ENCODE measurements at regions of chr3 and their contacts with region 1.

Region 1: DNA sequence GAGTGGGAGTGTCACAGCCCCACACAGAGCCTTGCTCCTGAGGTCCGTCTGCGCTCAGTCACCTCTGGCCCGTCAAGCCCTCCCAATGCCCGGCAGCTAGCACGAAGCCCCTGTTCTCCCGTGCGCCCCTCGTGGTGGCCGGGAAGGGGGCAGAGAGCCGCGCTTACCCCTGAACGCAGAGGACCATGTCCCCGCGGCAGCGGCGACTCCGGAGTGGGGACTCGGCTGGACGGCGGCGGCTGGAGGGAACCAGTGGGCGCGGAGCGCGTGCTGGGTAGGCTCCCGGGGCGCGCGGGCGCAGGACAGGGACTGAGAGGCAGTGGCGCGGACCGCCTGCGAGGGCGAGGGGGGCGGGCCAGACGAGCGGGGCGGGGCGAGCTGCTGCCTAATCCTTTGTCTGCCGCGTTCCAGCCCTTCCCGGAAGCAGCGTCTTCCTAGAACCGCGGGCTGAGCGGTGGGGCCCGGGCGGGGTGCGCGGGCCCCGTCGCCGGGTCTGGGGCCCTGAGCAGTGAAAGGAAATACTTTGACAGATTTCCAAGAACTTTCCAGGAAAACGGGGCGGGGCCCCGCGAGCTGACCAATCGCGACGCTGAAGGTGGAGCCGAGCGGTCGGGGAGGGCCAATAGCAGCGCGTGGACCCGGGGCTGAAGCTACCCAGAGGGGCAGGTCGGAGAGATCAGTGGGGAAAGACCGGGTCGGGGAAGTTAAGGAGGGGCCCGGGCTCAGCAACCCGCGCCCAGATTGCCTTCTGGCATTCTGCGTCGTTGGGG is at the start of gene CISH:
- DNase-seq: peak; percentile 67
- H3K4me3 ChIP-seq: peak within 1 kb of the TSS; percentile 68
- H3K27me3 ChIP-seq: no peaks in the 10 kb centered on the region
- CTCF ChIP-seq: peak; percentile 60
- polyA plus RNA-seq, gene CISH: 1.1 and 2.6 TPM in 2 replicates

Region 2: DNA sequence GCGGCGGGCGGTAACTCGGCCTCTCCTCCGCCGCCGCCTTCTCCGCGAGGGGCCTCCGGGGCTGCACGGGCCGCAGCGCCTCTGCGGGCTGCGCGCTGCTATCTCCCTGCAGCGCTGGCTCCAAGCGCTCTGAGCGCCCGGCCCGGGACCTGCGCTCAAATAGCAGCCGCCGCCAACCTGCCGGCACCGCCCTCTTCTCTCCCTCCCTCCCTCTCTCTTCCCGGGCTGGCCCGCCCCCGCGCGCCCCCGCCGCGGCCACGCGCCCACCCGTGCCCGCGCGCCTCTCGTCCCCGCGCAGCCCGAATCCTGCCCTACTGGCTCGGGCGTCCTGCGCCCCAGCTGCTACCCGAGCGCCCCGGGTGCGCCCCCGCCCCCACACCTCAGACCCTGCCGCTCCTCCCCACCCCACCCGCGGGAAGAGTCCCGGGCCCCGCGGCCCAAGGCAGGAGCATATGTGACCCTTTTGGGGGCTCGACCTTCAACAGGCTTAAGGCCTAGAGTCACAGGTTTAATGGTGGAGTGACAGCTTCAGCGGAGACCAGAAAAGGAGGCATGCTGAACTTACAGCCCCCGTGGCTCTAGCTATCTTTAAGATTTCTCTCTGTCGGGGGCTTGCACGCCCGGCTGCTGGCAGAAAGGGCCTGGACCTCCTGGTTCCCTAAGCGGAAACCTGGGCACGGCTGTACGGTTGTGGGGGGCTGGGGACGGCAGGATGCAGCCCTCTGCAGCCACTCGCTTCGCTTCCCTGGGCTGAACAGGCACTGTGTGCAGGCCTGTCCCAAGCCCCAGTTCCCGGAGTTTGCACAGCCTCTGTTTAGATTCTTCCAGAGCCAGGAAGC is 107.9 kb before region 1 on chr3 and contains the start of gene CACNA2D2:
- CTCF ChIA-PET with region 1: no interaction called
- POLR2A ChIA-PET with region 1: no interaction called
- DNase-seq: no peak
- H3K4me3 ChIP-seq: no peak within 1 kb of the TSS
- H3K27me3 ChIP-seq: peaks cover 37% of the 10 kb centered on the region
- CTCF ChIP-seq: no peak
- polyA plus RNA-seq, gene CACNA2D2: 0.04 and 0.11 TPM in 2 replicates

Region 3: GRCh38 chr3:50568947-50569749 is 42.5 kb before region 1 on chr3 and contains the start of gene HEMK1:
- CTCF ChIA-PET with region 1: interaction called, 479 read pairs
- POLR2A ChIA-PET with region 1: no interaction called
- DNase-seq: peak; percentile 58
- H3K4me3 ChIP-seq: peak within 1 kb of the TSS; percentile 96
- H3K27me3 ChIP-seq: no peaks in the 10 kb centered on the region
- CTCF ChIP-seq: no peak
- polyA plus RNA-seq, gene HEMK1: 14.4 and 21.3 TPM in 2 replicates

Region 4: GRCh38 chr3:50600841-50601591 is 10.6 kb before region 1 on chr3:
- CTCF ChIA-PET with region 1: interaction called, 64 read pairs
- POLR2A ChIA-PET with region 1: interaction called, 4 read pairs
- DNase-seq: peak; percentile 92
- H3K4me3 ChIP-seq: no peak overlapping the region
- H3K27me3 ChIP-seq: no peaks in the 10 kb centered on the region
- CTCF ChIP-seq: no peak

Region 5: DNA sequence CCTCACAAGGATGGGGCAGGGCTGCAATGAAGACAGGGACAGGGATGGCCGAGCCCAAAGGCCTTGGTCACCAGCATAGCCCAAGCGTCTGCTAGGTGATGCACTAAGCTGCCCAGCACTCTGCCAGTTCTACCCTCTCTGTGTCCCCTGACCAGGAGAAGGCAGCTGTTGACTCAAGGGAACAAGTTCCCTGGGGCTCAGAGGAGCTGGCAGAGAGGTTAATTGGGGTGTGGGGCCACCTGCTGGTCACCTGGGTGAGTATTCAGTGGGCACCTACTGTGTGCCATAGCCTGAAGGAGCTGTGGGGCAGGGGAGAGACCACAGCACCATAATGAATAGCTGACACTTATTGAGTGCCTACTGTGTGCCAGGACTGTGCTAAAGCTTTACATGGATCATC is 41.1 kb after region 1 on chr3:
- CTCF ChIA-PET with region 1: interaction called, 21 read pairs
- POLR2A ChIA-PET with region 1: no interaction called
- DNase-seq: no peak
- H3K4me3 ChIP-seq: no peak overlapping the region
- H3K27me3 ChIP-seq: no peaks in the 10 kb centered on the region
- CTCF ChIP-seq: peak; percentile 38

Region 6: DNA sequence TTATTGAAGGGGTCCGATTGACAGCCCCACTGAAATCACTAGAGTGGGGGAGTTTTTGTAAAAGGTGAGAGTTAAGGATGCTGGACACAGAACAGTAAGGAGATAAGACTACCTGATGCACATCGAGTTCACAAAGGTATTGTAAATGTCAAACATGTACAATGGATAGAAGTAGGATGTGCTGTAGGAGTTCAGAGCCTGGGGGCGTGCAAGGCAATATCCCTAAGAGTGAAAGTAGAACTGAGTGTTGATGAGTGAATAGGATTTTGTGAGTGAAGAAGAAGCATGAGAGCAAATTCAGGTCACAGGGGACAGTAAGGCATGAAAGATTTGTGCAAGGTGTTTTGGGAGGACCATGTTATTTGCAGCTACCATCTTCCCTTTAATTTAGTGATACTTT is 84.6 kb after region 1 on chr3:
- CTCF ChIA-PET with region 1: no interaction called
- POLR2A ChIA-PET with region 1: no interaction called
- DNase-seq: no peak
- H3K4me3 ChIP-seq: no peak overlapping the region
- H3K27me3 ChIP-seq: no peaks in the 10 kb centered on the region
- CTCF ChIP-seq: no peak

Region 7: DNA sequence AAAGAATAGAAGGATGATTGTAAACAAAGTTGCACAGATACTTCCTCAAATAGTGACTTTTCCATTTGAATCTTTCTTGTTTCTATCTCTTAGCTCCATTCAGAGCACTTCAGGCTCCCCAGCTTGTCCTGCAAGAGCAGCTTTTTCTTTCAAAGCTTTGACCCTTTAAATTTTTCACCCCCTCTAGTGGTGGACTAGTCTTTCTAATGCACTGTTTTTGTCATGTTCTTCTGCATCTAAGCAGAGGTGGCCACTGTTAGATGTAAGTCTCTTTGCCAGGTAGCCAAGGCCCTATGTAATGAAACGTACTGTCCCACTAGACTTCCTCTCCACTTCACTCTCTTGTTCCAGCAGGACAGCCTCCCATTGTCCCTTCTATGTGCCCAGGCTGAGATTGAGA is 699.4 kb after region 1 on chr3:
- CTCF ChIA-PET with region 1: interaction called, 25 read pairs
- POLR2A ChIA-PET with region 1: no interaction called
- DNase-seq: no peak
- H3K4me3 ChIP-seq: no peak overlapping the region
- H3K27me3 ChIP-seq: no peaks in the 10 kb centered on the region
- CTCF ChIP-seq: peak; percentile 60

Region 8: DNA sequence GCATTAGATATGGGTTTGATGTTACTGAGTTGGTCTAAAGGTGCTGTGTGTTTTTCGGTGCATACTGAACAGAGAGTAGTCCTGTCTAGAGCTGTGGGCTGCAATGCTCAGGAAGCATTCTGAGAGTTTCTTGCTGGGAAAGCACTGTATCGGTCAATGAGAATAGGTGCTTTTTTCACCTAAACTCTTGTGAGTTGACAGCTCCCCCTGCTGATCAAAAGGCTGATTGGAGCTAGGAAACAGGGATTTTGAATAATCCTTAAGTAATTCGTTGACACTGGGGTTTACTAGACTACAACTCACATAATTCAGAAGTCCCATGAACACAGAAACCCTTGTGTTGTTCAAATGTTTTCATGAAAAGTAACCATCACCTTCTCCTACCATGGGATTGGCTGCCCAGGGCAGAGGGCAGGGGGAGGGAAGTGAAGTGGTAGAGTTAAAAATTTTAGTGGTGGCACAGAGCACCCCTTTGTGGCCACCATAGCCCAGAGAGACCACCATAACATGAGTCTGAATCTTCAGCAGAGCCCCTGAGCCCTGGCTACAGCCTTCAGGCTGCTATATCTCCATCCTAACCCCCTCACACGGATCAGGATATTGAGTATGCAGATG is 760.4 kb after region 1 on chr3:
- CTCF ChIA-PET with region 1: interaction called, 28 read pairs
- POLR2A ChIA-PET with region 1: no interaction called
- DNase-seq: peak; percentile 5
- H3K4me3 ChIP-seq: no peak overlapping the region
- H3K27me3 ChIP-seq: no peaks in the 10 kb centered on the region; the same call in 1 of the 2 replicates
- CTCF ChIP-seq: peak; percentile 79

Region 9: DNA sequence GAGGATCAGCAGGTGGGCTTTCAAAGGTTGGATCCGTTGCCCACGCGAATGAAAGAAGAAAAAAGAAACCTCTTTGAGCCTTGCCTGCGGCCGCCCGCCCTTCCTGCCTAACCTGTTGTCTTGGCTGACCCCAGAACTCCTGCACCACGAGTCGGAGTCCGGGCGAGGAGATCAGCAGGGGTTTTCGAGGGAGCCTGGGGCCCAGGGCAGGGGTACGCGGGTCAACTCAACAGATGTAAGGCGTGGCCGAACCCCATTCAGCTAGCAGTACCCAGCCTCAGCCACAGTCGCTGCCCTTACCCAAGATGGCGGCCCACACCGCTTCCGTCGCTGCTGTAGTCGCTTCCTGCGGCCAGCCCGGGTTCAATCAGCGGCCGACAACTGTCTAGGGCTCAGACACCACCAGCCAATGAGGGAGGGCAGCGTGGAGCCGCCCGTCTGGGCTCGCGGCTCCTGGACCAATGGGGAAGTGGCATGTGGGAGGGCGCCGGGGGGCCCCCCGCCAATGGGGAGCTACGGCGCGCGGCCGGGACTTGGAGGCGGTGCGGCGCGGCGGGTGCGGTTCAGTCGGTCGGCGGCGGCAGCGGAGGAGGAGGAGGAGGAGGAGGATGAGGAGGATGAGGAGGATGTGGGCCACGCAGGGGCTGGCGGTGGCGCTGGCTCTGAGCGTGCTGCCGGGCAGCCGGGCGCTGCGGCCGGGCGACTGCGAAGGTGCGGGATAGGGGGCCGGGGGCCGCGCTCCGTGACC is 773.3 kb after region 1 on chr3 and contains the start of gene MANF:
- CTCF ChIA-PET with region 1: interaction called, 19 read pairs
- POLR2A ChIA-PET with region 1: no interaction called
- DNase-seq: peak; percentile 88
- H3K4me3 ChIP-seq: peak within 1 kb of the TSS; percentile 91
- H3K27me3 ChIP-seq: no peaks in the 10 kb centered on the region
- CTCF ChIP-seq: no peak
- polyA plus RNA-seq, gene MANF: 21.5 and 58.1 TPM in 2 replicates